Activated CD8-positive, alpha-beta T cell treated with anti-CD3 and anti-CD28 coated beads, Interleukin-2, amount 10 ng/mL, durations not matched to agents 7 days and 5 days (primary cell): ENCODE measurements at regions of chrX and their contacts with region 1.

Region 1: DNA sequence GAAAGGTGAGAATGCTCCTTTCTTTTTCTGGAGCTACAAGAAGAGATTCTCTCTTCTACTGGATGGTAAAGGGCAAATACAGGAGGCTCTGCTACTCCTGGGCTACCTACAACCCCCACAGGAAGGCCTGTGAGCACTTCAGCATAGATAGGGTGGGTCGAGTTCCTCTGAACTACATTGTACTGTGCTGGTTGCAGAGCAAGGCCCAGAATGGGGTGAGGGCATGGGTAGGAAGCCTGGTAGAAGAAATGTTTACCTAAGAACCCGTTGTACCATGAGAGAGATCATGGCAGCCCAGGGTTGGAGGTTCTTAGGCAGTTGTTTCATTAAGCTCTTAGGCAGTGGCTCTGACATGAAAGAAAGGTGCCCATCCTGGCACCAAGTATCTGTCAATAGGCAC is 510.4 kb downstream of the MID1IP1 start:
- DNase-seq: no peak
- ATAC-seq: no peak
- H3K4me3 Mint-ChIP-seq: no peak overlapping the region
- H3K27ac Mint-ChIP-seq: peak overlapping the region; percentile 90
- H3K4me1 Mint-ChIP-seq: peaks cover 37% of the 10 kb centered on the region
- H3K27me3 Mint-ChIP-seq: no peaks in the 10 kb centered on the region

Region 2: DNA sequence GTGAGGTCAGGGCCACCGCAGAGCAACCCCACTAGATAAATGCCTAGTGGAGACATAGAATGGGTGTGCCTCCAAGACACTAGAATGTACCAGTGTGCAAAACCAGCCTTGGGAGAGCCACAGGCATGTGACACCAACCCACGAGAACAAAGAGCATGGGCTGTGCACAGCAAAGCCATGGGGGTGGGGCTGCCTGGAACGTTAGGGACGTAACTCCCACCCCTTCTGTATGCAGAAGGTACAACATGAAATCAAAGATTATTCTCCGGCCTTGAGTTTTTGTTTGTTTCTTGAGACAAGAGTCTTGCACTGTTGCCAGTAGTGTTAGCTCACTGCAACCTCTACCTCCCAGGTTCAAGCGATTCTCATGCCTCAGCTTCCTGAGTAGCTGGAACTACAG is 411.0 kb before region 1 on chrX:
- CTCF ChIA-PET with region 1: no interaction called
- POLR2A ChIA-PET with region 1: interaction called, 11 read pairs
- DNase-seq: no peak
- ATAC-seq: no peak
- H3K4me3 Mint-ChIP-seq: no peak overlapping the region
- H3K27ac Mint-ChIP-seq: no peak overlapping the region
- H3K4me1 Mint-ChIP-seq: no peaks in the 10 kb centered on the region
- H3K27me3 Mint-ChIP-seq: no peaks in the 10 kb centered on the region